ENCODE measurements at regions of chr15 and their contacts with region 1.

Region 1: DNA sequence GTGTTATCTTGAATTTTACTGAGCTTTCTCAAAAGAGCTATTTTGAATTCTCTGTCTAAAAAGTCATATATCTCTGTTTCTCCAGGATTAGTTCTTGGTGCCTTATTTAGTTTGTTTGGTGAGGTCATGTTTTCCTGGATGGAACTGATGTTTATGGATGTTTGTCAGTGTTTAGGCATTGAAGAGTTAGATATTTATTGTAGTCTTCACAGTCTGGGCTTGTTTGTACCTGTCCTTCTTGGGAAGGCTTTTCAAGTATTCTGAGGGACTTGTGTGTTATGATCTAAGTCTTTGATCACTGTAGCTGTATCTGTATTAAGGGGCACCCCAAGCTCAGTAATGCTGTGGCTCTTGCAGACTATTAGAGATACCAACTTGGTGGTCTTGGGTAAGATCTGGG is 10.6 kb upstream of the RAD51 start:
- DNase-seq: no peak
- ATAC-seq: no peak
- H3K4me3 ChIP-seq: no peak overlapping the region
- H3K27ac ChIP-seq: no peak overlapping the region
- H3K4me1 ChIP-seq: no peaks in the 10 kb centered on the region
- CTCF ChIP-seq: no peak
- EP300 ChIP-seq: no peak
- POLR2A ChIP-seq: no peak
- RAD21 ChIP-seq: no peak

Region 2: DNA sequence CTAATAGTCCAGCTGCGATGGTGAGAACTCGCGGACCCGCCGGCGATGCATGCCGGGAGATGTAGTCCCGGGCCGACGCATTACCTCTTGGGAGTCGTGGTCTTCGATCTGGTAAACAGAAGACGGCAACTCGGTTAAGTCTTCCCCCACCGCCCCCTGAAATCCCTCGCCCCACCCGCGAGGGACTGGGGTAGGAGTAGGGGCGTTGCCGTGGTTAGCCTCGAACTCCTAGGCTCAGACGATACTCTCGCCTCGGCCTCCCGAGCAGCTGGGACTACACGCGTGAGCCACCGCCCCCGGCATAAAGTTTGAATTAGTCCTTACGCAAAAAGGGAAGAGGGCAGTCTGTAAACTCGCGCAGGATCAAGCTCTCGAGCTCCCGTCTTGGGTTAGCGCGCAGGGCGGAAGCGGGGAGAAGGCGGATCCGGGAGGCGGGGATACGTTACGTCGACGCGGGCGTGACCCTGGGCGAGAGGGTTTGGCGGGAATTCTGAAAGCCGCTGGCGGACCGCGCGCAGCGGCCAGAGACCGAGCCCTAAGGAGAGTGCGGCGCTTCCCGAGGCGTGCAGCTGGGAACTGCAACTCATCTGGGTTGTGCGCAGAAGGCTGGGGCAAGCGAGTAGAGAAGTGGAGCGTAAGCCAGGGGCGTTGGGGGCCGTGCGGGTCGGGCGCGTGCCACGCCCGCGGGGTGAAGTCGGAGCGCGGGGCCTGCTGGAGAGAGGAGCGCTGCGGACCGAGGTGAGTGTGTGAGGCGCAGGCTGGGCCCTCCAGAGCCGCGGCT is 10.5 kb after region 1 on chr15 and contains the start of gene RAD51:
- CTCF ChIA-PET with region 1: interaction called, 15 read pairs
- POLR2A ChIA-PET with region 1: no interaction called
- DNase-seq: peak; percentile 83 to 90
- ATAC-seq: peak; percentile 94 to 97
- H3K4me3 ChIP-seq: peak within 1 kb of the TSS; percentile 85
- H3K27ac ChIP-seq: peak within 1 kb of the TSS; percentile 96 to 97
- H3K4me1 ChIP-seq: peaks cover 8% of the 10 kb centered on the region; the same call in 2 of the 3 replicates
- CTCF ChIP-seq: no peak
- EP300 ChIP-seq: no peak
- POLR2A ChIP-seq: peak; percentile 47
- RAD21 ChIP-seq: no peak
- polyA plus RNA-seq, gene RAD51: 11.5 and 12.9 TPM in 2 replicates